ENCODE measurements at regions of chr1 and their contacts with region 1.

Region 1: GRCh38 chr1:217012659-217013058 is 289.4 kb upstream of the ESRRG start:
- DNase-seq: peak; percentile 41
- ATAC-seq: no peak
- H3K4me3 ChIP-seq: no peak overlapping the region
- H3K27ac ChIP-seq: no peak overlapping the region
- H3K4me1 ChIP-seq: peaks cover 28% of the 10 kb centered on the region
- H3K27me3 ChIP-seq: no peaks in the 10 kb centered on the region
- CTCF ChIP-seq: no peak

Region 2: GRCh38 chr1:216910081-216910840 is 102.4 kb before region 1 on chr1:
- CTCF ChIA-PET with region 1: no interaction called
- POLR2A ChIA-PET with region 1: interaction called, 12 read pairs
- intact Hi-C with region 1: no loop called
- DNase-seq: no peak
- ATAC-seq: no peak; the same call in 1 of the 2 replicates
- H3K4me3 ChIP-seq: no peak overlapping the region
- H3K27ac ChIP-seq: no peak overlapping the region
- H3K4me1 ChIP-seq: no peaks in the 10 kb centered on the region
- H3K27me3 ChIP-seq: no peaks in the 10 kb centered on the region
- CTCF ChIP-seq: no peak

Measured in PC-3 (cell line).